ENCODE measurements at regions of chr2 and their contacts with region 1.

Region 1: DNA sequence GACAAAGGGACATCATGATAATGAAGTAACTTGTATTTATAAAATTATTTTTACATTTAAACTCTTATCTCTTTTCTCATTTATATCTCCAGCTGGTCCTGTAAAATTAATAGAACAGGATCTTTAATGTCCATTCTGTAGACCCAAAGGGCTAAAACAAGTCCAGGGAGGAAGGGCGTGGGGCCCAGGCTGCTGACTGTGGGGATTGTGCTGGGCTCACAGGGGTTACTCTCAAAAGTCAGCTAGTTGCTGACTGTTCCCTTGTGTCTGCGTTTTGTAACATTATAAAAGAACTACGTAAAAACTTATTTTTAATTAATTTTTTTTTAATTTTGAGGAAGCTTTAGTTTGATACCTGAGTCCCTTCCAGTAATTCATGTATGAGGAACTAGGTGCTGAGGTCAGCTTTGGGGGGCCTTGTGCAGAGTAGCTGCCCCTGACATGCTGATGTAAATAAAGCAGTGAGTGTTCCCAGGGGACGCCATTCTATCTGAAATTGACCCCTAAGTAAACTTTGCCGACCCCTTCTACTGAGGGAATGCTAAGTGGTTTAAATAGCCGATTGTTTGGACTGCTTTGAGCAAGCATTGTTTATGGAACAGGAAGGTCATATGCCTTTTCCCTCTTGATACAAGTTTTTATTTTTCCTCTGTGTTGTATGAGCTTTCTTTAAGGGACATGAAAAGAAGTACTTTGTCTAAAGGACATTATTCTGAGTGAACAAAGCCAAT is 56.4 kb downstream of the MERTK start:
- DNase-seq: no peak
- H3K4me3 Mint-ChIP-seq: no peak overlapping the region
- H3K27ac Mint-ChIP-seq: no peak overlapping the region
- H3K4me1 Mint-ChIP-seq: peaks cover 19% of the 10 kb centered on the region
- H3K27me3 Mint-ChIP-seq: peaks cover 19% of the 10 kb centered on the region

Region 2: DNA sequence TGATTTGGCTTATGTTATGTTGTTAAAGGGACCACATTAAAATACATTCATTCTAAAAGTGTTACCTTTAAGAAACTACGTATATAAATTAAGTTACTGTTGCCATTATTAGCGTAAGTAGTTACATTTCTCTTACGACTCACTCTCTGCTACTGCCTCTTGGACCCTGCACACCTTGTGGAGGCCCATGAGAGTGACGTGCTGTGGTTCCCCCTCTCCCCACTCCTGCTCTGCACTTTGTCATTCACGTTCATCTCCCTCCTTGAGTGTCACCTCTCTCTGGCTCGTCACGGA is 57.2 kb before region 1 on chr2:
- CTCF ChIA-PET with region 1: no interaction called
- POLR2A ChIA-PET with region 1: no interaction called
- intact Hi-C with region 1: no loop called
- DNase-seq: no peak
- H3K4me3 Mint-ChIP-seq: peak overlapping the region; percentile 73
- H3K27ac Mint-ChIP-seq: no peak overlapping the region
- H3K4me1 Mint-ChIP-seq: peaks cover 6% of the 10 kb centered on the region
- H3K27me3 Mint-ChIP-seq: peaks cover 23% of the 10 kb centered on the region

Region 3: GRCh38 chr2:111986116-111986900 is 31.5 kb after region 1 on chr2:
- CTCF ChIA-PET with region 1: no interaction called
- POLR2A ChIA-PET with region 1: no interaction called
- intact Hi-C with region 1: loop called (anchors 5 kb)
- DNase-seq: no peak
- H3K4me3 Mint-ChIP-seq: no peak overlapping the region
- H3K27ac Mint-ChIP-seq: no peak overlapping the region
- H3K4me1 Mint-ChIP-seq: peaks cover 25% of the 10 kb centered on the region
- H3K27me3 Mint-ChIP-seq: peaks cover 3% of the 10 kb centered on the region

Region 4: DNA sequence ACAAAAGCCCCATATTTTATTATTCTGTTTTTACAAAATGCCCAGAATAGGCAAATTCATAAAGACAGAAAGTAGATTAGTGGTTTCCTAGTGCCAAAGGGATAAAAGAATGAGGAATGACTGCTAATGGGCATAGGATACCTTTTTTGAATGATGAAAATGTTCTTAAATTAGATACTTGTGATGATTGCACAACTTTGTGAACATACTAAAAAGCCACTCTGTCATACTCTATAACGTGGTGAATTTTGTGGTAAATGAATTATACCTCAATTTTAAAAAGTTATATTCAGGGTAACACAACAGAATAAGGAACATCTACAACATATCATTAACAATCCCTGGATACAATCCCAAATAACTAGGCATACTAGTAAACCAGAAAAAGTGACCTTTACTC is 174.3 kb after region 1 on chr2:
- CTCF ChIA-PET with region 1: no interaction called
- POLR2A ChIA-PET with region 1: no interaction called
- intact Hi-C with region 1: no loop called
- DNase-seq: no peak
- H3K4me3 Mint-ChIP-seq: no peak overlapping the region
- H3K27ac Mint-ChIP-seq: no peak overlapping the region
- H3K4me1 Mint-ChIP-seq: peaks cover 6% of the 10 kb centered on the region
- H3K27me3 Mint-ChIP-seq: no peaks in the 10 kb centered on the region

Measured in activated CD4-positive, alpha-beta memory T cell treated with anti-CD3 and anti-CD28 coated beads for 36 hours (primary cell).